Left ventricle myocardium inferior (tissue), 1 donor: ENCODE measurements at regions of chr12 and their contacts with region 1.

Region 1: DNA sequence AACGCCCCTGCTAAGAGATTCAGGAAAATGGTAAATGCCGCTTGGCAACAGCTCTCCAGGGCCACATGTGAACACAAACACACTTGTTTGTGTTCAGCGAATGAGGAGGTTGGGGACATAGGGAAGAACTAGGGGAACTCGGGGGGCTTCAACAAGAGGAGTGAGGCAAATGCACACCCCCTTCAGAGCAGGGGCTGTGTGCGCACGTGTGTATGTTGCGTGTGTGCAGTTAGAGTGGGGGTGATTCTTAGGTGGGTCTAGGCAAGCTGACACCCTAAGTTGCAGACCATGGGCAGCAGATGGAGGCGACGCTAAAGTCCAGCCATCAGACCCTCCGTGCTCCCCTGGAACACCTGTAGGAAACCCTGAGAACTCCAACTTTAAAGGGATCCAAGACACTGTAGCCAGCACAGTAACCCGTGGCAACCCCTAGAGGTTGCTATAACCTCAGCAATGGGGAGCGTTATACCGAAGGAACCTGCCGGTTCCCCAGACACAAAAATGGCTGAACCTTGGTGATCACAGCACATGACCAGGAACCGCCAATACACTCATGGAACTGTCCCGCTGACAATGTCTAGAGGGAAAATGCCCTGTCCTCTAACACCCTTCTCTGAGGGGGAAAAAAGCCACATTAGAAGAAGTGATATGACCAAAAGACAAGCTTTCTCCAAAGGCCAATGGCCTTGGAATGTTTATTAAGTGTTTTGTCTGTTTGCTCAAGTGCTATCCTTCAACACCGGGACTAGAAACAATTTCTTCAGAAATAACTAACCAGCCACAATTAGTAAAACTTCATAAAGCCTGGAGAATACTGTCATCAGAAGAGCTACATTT is 86.5 kb upstream of the CEP83 start:
- DNase-seq: no peak
- H3K4me3 ChIP-seq: no peak overlapping the region
- H3K27ac ChIP-seq: no peak overlapping the region
- H3K4me1 ChIP-seq: no peaks in the 10 kb centered on the region
- H3K27me3 ChIP-seq: no peaks in the 10 kb centered on the region
- CTCF ChIP-seq: peak; percentile 85

Region 2: GRCh38 chr12:94762259-94762942 is 216.2 kb after region 1 on chr12:
- intact Hi-C with region 1: loop called (anchors 10 kb)
- DNase-seq: no peak
- H3K4me3 ChIP-seq: no peak overlapping the region
- H3K27ac ChIP-seq: no peak overlapping the region
- H3K4me1 ChIP-seq: no peaks in the 10 kb centered on the region
- H3K27me3 ChIP-seq: peaks cover 19% of the 10 kb centered on the region
- CTCF ChIP-seq: no peak